ENCODE measurements at regions of chr20 and their contacts with region 1.

Region 1: GRCh38 chr20:10660661-10661060 is 13.1 kb downstream of the JAG1 start:
- DNase-seq: no peak
- H3K4me3 ChIP-seq: no peak overlapping the region
- H3K27ac ChIP-seq: no peak overlapping the region
- H3K4me1 ChIP-seq: peaks cover 19 to 43% (median 33%) of the 10 kb centered on the region in 4 experiments
- H3K27me3 ChIP-seq: no peaks in the 10 kb centered on the region
- CTCF ChIP-seq: no peak
- EP300 ChIP-seq: no peak
- POLR2A ChIP-seq: no peak
- RAD21 ChIP-seq: no peak

Region 2: DNA sequence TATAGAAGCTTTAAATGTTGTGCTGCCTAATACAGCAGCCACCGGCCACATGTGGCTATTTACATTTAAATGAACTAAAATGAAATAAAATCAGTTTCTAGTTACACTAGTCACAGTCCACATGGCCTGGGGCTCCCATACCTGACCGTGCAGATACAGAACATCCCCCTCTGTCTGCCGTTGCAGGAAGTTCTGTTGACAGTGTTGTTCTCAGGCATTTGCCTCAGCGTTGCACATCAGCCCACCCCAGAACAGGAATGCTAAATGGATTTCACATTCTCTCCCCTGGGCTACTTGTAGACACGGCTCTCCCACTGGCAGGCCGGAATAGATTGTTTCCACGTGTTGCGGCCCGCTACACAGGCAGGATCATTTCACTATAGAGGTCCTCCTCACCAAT is 13.2 kb before region 1 on chr20:
- CTCF ChIA-PET with region 1: interaction called, 10 read pairs
- POLR2A ChIA-PET with region 1: interaction called, 8 read pairs
- DNase-seq: no peak
- H3K4me3 ChIP-seq: no peak overlapping the region
- H3K27ac ChIP-seq: no peak overlapping the region
- H3K4me1 ChIP-seq: peaks cover 4 to 18% (median 11%) of the 10 kb centered on the region in 4 experiments; a peak in 6 of 7 replicates
- H3K27me3 ChIP-seq: no peaks in the 10 kb centered on the region
- CTCF ChIP-seq: peak; percentile 59 to 72 (median 60)
- EP300 ChIP-seq: no peak
- POLR2A ChIP-seq: no peak
- RAD21 ChIP-seq: peak; percentile 50 to 66